AG04449 (cell line): ENCODE measurements at regions of chr19 and their contacts with region 1.

Region 1: DNA sequence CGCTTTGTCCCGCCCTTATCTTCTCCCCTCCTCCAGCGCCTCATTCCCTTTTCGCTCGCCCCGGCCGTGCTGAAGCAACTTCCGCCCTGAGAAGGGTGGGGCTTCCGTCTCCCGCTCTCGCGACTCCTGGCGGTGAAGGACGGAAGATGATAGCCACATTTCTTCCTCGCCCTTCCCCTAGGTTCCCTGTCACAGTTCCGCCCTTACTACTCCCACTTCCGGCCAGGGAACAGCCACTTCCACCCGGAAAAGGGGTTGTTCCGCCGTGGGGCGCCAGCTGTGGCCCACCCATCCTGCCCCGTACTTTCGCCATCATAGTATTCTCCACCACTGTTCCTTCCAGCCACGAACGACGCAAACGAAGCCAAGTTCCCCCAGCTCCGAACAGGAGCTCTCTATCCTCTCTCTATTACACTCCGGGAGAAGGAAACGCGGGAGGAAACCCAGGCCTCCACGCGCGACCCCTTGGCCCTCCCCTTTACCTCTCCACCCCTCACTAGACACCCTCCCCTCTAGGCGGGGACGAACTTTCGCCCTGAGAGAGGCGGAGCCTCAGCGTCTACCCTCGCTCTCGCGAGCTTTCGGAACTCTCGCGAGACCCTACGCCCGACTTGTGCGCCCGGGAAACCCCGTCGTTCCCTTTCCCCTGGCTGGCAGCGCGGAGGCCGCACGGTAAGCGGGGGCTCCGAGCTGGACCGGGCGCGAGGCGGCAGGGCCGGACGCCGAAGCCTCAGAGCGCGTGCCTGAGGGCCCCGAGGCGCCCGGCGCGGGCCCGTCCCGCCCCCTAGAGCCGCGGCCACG is at the start of gene RPS19:
- DNase-seq: peak; percentile 87
- H3K4me3 ChIP-seq: peak within 1 kb of the TSS; percentile 98
- CTCF ChIP-seq: peak; percentile 62

Region 2: GRCh38 chr19:41801792-41802211 is 58.0 kb before region 1 on chr19:
- CTCF ChIA-PET with region 1: no interaction called
- POLR2A ChIA-PET with region 1: no interaction called
- DNase-seq: no peak
- H3K4me3 ChIP-seq: no peak overlapping the region
- CTCF ChIP-seq: no peak

Region 3: GRCh38 chr19:41872775-41873647 is 13.2 kb after region 1 on chr19:
- CTCF ChIA-PET with region 1: interaction called, 20 read pairs
- POLR2A ChIA-PET with region 1: interaction called, 27 read pairs
- DNase-seq: no peak
- H3K4me3 ChIP-seq: no peak overlapping the region
- CTCF ChIP-seq: peak; percentile 84

Region 4: GRCh38 chr19:41882568-41883462 is 23.0 kb after region 1 on chr19 and contains the start of gene ARHGEF1:
- CTCF ChIA-PET with region 1: no interaction called
- POLR2A ChIA-PET with region 1: interaction called, 12 read pairs
- DNase-seq: no peak
- H3K4me3 ChIP-seq: peak within 1 kb of the TSS; percentile 98
- CTCF ChIP-seq: no peak

Region 5: DNA sequence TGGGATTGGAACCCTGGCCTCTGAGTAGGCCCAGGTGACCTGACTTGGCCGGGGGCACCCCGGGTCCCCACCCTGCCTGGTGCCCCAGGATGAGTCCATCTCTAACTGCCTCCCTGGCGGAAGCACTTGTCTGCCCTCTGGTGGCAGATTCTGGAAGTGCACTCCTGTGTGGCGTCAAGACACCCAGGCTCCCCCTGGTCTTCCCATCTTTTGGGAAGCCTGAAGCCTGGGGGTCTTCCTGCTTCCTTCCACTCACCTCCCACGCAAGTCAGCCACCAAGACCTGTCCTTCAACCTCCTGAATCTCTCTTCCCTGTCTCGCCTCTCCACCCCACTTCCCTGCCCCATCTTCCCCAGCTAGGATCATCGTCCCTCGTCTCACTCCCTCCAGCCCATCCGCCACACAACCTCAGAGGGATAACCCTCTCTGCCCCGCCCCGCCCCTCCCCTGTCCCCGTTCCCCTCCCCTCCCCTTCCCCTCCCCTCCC is 91.9 kb after region 1 on chr19:
- CTCF ChIA-PET with region 1: interaction called, 12 read pairs
- POLR2A ChIA-PET with region 1: interaction called, 6 read pairs
- DNase-seq: no peak
- H3K4me3 ChIP-seq: peak overlapping the region; percentile 33; the same call in 1 of the 2 replicates
- CTCF ChIP-seq: peak; percentile 96

Region 6: DNA sequence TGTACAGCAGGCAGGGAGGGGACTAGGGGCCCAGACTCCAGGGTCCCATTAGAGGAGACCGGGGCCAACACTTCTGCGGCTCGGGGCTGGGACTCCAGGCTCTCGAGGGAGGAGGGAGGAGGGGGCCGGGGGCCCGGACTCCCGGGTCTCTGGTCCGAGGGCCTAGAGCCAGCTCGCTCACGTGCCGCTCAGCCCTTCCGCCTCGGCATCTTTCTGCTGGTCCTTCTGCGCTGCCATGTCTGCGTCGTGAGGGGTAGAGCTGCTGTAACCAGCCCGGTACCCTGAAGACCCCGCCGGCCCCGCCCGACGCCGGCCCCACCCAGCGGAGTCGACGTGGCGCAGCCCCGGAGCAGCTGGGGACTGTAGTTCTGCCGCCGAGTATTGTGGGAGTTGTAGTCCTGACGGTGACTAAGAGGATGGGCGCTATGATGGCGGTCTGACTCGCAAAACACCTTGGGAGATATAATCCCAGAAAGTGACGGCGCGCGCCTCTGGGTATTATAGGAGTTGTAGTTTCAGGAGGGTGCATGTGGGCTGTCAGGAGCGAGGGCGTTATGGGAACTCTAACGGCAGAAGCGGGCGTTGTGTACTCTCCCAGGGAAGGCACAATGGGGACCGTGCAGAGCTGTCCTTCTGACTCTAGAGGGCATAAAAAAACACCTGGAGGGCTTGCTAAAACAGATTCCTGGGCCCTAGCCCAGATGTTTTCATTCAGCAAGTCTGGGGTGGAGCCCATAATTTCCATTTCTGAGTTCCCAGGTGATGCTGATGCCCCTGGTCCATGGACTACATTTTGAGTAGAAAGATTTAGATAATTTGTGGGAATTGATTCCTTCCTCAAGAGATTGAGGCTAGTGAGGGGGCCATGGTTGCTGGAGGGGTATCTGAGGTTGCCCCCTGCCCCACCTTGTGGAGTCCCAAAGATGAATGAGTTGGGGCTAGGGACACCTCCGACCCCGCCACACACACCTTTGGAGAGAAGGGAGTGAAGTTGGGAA is 99.5 kb after region 1 on chr19 and contains the start of gene RABAC1:
- CTCF ChIA-PET with region 1: interaction called, 11 read pairs
- POLR2A ChIA-PET with region 1: interaction called, 14 read pairs
- DNase-seq: peak; percentile 47
- H3K4me3 ChIP-seq: peak within 1 kb of the TSS; percentile 98
- CTCF ChIP-seq: peak; percentile 11